Activated T-helper 1 cell treated with anti-CD3 and anti-CD28 coated beads, Interleukin-12 subunit alpha, Interleukin-12 subunit beta, Interleukin-2, Interleukin-4 antibody, amounts not matched to agents 30 ng/mL and 10 ng/mL and 1 ng/mL, durations not matched to agents 14 hours and 24 hours and 36 hours (primary cell): ENCODE measurements at regions of chr2 and their contacts with region 1.

Region 1: DNA sequence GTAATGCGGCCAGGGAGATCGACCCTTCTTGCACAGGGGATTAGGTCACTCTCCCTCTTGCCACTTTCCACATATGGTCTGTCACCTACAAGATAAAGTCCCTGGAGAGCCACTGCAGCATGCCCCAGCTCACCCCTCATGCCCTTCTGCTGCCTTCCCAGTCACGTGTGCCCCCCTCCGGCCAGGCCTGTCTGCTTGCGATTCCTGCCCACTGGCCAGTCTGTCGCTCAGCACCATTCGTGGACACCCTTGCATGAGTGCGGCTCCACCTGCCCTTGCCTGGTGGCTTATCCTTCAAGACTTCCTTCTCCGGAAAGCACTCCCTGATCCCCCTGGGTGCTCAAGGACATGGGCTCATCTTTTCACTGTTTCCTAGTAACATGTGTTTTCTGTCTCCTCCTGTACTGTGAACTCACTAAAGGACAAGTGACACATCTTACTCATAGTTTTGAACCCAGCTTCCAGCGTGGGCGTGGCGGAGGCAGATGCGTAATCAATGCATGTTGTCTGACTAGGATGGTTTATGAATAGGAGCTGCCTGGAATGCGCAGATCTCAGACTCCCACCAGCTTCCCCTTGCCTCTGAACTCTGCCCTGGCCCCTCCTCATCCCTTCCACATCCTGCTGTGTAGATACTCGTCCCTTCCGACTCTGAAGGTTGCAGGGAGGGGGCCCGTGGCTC is 7.8 kb upstream of the NT5DC4 start:
- DNase-seq: no peak
- H3K4me3 Mint-ChIP-seq: peak overlapping the region; percentile 56
- H3K27ac Mint-ChIP-seq: peak overlapping the region; percentile 88
- H3K4me1 Mint-ChIP-seq: peaks cover 48% of the 10 kb centered on the region
- H3K27me3 Mint-ChIP-seq: peaks cover 10% of the 10 kb centered on the region

Region 2: GRCh38 chr2:112726497-112727190 is 13.6 kb after region 1 on chr2:
- intact Hi-C with region 1: loop called (anchors 2 kb)
- DNase-seq: peak; percentile 86
- H3K4me3 Mint-ChIP-seq: no peak overlapping the region
- H3K27ac Mint-ChIP-seq: no peak overlapping the region
- H3K4me1 Mint-ChIP-seq: peaks cover 16% of the 10 kb centered on the region
- H3K27me3 Mint-ChIP-seq: no peaks in the 10 kb centered on the region

Region 3: GRCh38 chr2:112737542-112738232 is 24.6 kb after region 1 on chr2:
- intact Hi-C with region 1: no loop called
- DNase-seq: no peak
- H3K4me3 Mint-ChIP-seq: no peak overlapping the region
- H3K27ac Mint-ChIP-seq: no peak overlapping the region
- H3K4me1 Mint-ChIP-seq: peaks cover 10% of the 10 kb centered on the region
- H3K27me3 Mint-ChIP-seq: no peaks in the 10 kb centered on the region